ENCODE measurements at regions of chr10 and their contacts with region 1.

Region 1: GRCh38 chr10:6202684-6203330 is at the start of gene PFKFB3:
- DNase-seq: peak; percentile 94 to 95
- H3K4me3 ChIP-seq: peak within 1 kb of the TSS; percentile 49 to 64
- H3K27ac ChIP-seq: peak within 1 kb of the TSS; percentile 87 to 96
- H3K4me1 ChIP-seq: peaks cover 0 to 22% of the 10 kb centered on the region in 2 donors
- H3K27me3 ChIP-seq: no peaks in the 10 kb centered on the region
- CTCF ChIP-seq: peak; percentile 94 to 99 (median 98)
- POLR2A ChIP-seq: peak; percentile 97
- total RNA-seq, gene PFKFB3: 7.4 to 54.5 (median 14.7) TPM

Region 2: DNA sequence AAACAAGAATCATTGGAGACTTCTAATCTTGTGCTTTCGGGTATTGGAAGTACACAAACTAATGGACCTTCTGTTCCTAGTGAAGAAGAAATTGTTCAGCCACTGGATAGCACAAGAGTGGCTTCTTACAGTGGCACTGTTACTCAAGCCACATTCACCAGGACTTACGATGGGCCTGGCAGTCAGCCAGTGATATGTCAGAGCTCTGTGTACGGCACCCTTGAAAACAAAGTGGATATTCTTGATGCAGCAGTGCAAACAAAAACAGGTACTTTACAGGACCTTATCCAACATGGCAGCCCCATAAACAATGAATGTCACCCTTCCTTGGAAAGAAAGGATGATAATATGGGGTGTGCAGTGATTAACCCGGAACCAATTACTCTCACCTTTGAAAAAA is 456.6 kb before region 1 on chr10:
- intact Hi-C with region 1: no loop called
- DNase-seq: no peak
- H3K4me3 ChIP-seq: no peak overlapping the region
- H3K27ac ChIP-seq: no peak overlapping the region
- H3K4me1 ChIP-seq: no peaks in the 10 kb centered on the region
- H3K27me3 ChIP-seq: no peaks in the 10 kb centered on the region
- CTCF ChIP-seq: no peak
- POLR2A ChIP-seq: no peak

Region 3: DNA sequence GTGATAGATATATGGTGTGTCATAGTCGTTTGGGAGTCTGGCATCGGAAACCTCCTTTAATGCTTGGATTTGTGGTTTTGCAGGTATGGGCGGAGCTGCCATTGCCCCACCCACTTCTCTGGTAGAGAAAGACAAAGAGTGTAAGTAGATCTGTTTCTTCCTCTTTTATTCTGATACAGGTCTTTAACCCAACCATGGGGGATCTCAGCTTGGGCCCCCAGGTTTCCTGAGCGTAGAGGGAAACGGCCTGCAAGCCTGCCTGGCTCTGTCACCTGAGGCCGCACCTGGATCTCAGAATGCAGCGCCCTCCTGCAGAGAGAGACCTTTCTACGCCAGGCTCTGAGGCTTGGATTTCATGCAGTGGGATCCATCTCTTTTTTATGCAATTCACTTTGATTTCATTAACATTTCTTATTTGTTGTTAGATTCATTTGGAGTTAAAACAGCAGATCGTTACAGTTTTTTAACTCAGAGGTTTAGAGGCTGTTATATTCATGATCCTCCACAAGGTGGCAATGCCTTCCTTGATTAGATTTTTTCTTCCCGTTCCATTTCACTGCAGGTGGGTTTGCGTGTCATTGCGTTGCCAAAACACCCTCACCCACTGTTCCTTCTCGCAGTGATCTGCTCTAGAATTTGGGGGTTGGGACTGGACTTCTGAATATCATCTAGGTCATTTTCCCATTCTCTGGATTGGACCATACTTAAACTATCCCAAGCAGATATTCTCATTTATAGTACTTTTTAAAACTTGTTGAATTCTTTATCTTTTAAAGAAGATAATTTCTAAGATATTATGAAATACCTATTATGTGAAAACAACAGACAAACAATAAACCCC is 94.0 kb before region 1 on chr10:
- intact Hi-C with region 1: loop called (anchors 5 kb)
- DNase-seq: no peak
- H3K4me3 ChIP-seq: no peak overlapping the region
- H3K27ac ChIP-seq: no peak overlapping the region
- H3K4me1 ChIP-seq: no peaks in the 10 kb centered on the region
- H3K27me3 ChIP-seq: no peaks in the 10 kb centered on the region
- CTCF ChIP-seq: peak; percentile 69 to 77 (median 74)
- POLR2A ChIP-seq: no peak

Region 4: DNA sequence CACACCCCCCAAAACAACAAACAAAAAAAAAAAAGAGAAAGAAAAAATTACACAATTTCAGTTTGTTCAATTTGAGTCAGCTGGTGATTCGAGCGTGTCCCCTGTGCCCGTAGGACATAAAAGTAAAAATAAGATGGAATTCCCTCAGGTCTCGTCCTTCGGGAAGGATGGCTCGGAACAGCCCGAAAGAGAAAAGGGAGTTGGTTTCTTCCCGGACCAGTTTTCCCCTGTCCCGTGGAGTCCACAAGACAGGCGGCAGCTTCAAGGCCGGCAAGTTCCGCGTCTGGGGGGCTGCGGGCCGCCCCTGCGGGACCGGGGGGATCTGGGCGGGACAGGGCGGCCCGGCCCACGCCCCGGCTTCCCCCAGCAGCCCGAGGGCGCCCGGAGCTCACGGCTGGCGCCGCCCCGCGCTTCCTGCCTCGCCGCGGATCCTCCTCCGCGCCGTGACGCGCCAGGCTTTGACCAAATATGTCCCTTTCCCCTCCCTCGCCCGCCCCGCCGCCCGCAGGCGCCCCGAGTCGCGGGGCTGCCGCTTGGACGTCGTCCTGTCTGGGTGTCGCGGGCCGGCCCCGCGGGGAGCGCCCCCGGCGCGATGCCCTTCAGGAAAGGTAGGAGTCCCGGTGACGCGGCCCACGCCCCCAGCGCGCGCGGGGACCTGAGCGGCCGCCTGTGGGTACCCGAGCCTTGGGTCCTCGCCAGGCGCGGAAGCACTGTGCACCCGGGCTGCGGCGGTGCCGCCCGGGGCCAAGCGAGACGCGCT is 58.2 kb before region 1 on chr10:
- intact Hi-C with region 1: loop called (anchors 10 kb)
- DNase-seq: peak; percentile 89 to 90
- H3K4me3 ChIP-seq: peak overlapping the region; percentile 55 to 77
- H3K27ac ChIP-seq: peak overlapping the region; percentile 87 to 89
- H3K4me1 ChIP-seq: peaks cover 0 to 10% of the 10 kb centered on the region in 2 donors
- H3K27me3 ChIP-seq: no peaks in the 10 kb centered on the region
- CTCF ChIP-seq: no peak
- POLR2A ChIP-seq: peak; percentile 60 to 79

Region 5: GRCh38 chr10:6269953-6270867 is 67.4 kb after region 1 on chr10:
- intact Hi-C with region 1: no loop called
- DNase-seq: no peak
- H3K4me3 ChIP-seq: no peak overlapping the region
- H3K27ac ChIP-seq: no peak overlapping the region
- H3K4me1 ChIP-seq: no peaks in the 10 kb centered on the region
- H3K27me3 ChIP-seq: no peaks in the 10 kb centered on the region
- CTCF ChIP-seq: no peak
- POLR2A ChIP-seq: no peak

Region 6: GRCh38 chr10:6401562-6402348 is 198.9 kb after region 1 on chr10:
- intact Hi-C with region 1: loop called (anchors 10 kb)
- DNase-seq: peak; percentile 70 to 77
- H3K4me3 ChIP-seq: peak overlapping the region in 1 of 2 donors; percentile 34
- H3K27ac ChIP-seq: peak overlapping the region in 1 of 2 donors; percentile 21
- H3K4me1 ChIP-seq: peaks cover 0 to 2% of the 10 kb centered on the region in 2 donors
- H3K27me3 ChIP-seq: no peaks in the 10 kb centered on the region
- CTCF ChIP-seq: peak; percentile 83 to 93 (median 88)
- POLR2A ChIP-seq: no peak

Measured in uterus (tissue), 4 donors.